ENCODE measurements at regions of chr1 and their contacts with region 1.

Region 1: DNA sequence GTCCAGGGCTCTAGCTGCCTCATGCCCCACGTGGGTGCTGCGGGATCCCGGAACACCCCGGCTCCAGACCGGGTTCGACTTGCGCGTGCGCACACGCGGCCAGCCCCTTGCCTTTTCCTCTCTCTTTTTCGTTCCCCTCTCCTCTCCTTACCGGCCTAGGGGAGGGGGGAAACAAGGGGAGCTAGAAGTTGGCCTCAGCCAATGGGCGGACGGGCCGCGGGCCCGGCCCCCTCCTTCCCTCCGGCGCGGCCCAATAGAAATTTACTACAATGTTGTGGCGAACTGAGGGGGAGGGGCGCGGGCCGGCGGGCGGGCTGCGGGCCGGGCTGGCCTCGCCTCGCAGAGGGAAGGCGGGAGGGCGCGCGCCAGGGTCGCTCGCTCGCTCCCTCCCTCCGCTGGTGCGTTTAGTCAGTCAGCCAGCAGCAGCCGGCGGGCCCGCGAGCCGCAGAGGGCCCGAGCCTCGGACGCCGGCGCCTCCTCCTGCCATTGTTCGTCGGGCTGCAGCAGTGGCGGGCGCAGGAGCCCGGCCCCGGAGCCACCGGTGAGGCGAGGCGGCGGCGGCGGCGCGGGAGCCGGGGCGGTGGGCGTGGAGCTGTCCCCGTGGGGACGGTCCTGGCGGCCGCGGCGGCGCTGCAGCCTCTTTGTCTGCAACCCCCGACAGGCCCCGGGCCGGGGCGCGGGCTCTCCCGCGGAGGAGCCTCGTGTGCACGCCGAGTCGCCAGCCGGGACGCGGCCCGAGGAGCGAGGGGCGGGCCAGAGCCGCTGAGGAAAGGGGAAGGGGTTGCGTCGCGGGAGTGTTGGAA is at the start of gene EPB41:
- DNase-seq: peak; percentile 96
- CTCF ChIP-seq: no peak

Region 2: DNA sequence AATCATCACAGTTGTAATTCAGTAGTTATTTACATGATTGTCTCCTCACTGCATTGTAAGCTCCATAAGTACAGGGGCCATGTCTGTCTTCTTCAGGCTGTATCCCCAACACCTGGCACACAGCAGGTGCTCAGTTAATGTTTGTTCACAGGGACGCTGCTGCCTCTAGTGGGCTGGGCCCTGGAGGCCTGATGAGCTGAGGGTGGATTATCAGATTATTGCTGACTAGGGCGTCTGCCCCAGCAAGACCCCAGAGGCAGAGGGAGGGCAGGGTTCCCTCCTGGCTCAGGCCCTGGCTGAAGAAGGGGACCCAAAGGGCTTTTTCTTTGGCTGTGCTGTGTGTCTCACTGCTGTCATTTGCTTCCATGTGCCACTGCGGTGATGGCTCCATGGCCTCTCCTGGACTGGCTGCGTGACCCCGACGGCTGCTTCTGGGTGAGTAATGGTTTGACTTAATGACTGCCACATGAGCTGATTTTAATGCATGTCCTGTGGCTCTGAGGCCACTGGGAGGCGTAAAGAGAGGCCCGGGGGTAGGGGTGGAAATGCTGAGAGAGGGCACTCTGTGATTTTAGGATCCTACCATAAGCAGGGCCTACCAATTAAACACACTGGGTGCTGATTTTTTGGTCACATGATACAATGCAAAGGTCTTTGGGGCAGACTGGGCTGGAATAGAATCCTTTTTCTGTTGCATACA is 20.9 kb before region 1 on chr1:
- CTCF ChIA-PET with region 1: interaction called, 12 read pairs
- POLR2A ChIA-PET with region 1: no interaction called
- DNase-seq: no peak
- CTCF ChIP-seq: no peak

Region 3: DNA sequence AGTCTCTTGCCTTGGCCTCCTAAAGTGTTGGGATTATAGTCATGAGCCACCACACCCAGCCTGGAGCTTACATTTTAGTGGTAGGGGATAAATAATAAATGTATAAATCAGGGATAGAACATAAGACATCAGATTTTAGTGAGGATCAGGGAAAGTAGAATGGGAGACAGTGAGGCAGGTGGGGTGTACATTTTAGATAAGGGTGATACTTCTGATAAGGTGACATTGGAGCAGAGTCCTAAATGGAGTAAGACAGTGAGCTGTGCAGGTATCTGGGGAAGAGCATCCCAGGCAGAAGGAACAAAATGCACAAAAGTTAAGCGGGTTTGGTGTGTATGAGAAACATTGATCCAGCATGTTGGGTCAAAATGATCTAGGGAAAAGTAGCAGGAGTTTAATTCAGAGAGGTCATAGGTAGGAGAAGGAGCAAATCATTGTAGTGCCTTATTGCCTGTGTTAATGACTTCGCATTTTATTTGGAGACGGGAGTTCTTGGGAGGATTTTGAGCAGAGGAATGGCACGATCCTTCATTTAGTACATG is 11.0 kb after region 1 on chr1:
- CTCF ChIA-PET with region 1: interaction called, 16 read pairs
- POLR2A ChIA-PET with region 1: no interaction called
- DNase-seq: no peak
- CTCF ChIP-seq: no peak

Measured in GM10248 (cell line).